ENCODE measurements at regions of chr14 and their contacts with region 1.

Region 1: GRCh38 chr14:93132470-93133065 is 16.8 kb upstream of the ITPK1 start:
- DNase-seq: no peak
- ATAC-seq: peak; percentile 87
- H3K4me3 ChIP-seq: no peak overlapping the region
- H3K27ac ChIP-seq: no peak overlapping the region
- H3K4me1 ChIP-seq: no peaks in the 10 kb centered on the region
- H3K27me3 ChIP-seq: no peaks in the 10 kb centered on the region
- CTCF ChIP-seq: peak; percentile 68

Region 2: GRCh38 chr14:92951912-92952471 is 180.6 kb before region 1 on chr14:
- CTCF ChIA-PET with region 1: interaction called, 6 read pairs
- POLR2A ChIA-PET with region 1: no interaction called
- in situ Hi-C with region 1: no loop called
- intact Hi-C with region 1: loop called (anchors 10 kb)
- DNase-seq: peak; percentile 46
- ATAC-seq: peak; percentile 97
- H3K4me3 ChIP-seq: no peak overlapping the region
- H3K27ac ChIP-seq: no peak overlapping the region
- H3K4me1 ChIP-seq: no peaks in the 10 kb centered on the region
- H3K27me3 ChIP-seq: no peaks in the 10 kb centered on the region
- CTCF ChIP-seq: peak; percentile 90